Gastrocnemius medialis (tissue), 4 donors: ENCODE measurements at regions of chr11 and their contacts with region 1.

Region 1: DNA sequence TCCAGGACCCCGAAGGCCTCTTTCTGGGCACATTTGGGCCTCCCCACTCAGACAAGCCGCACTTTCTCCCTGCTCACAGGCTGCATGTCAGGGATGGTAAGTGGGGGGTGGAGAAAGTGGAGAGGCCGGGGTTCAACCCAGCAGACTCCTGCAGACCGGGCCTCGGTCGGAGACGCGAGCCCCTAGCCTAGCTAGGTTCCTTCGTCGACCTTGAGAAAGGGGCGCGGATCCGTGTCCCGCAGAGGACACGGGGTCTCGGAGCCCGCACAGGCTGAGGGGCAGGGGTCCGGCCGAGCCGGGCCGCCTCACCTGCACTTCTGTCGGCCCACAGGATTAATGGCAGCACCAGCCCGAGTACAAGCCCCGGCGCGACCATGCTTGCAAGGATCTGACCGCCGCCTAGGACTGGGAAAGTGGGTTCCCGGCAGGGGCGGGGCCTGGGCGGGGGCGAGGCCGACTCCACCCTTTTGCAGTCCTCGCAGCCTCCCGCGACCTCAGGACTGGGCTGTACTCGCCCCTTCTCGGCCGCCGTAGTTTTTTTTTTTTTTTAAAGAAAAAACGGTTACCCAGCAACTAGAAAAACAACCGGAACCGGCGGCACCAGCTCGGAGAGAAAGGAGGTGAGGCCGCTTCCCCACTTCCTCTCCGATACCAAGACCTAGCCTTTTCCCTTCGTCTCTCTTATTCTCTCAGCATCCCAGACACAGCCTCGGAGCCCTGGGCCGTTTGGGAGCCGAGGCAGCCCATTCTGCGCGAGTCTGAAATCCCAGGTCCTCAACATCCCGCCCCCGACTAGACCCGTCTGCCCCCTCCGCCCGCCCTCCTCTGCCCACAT is at the starts of genes SIAE and SPA17:
- DNase-seq: peak; percentile 85 to 90
- ATAC-seq: peak; percentile 87 to 92
- H3K4me3 ChIP-seq: peak within 1 kb of the TSS; percentile 70 to 84 (median 76)
- H3K27ac ChIP-seq: peak within 1 kb of the TSS; percentile 77 to 83 (median 82)
- H3K4me1 ChIP-seq: peaks cover 15 to 17% of the 10 kb centered on the region in 2 donors
- H3K27me3 ChIP-seq: no peaks in the 10 kb centered on the region
- CTCF ChIP-seq: peak in 2 of 5 experiments; percentile 6 to 10
- POLR2A ChIP-seq: peak; percentile 25 to 36
- total RNA-seq, gene SIAE: 8.2 to 12.7 (median 10.1) TPM
- total RNA-seq, gene SPA17: 0.38 to 2.0 (median 0.44) TPM in 3 of 4 donors, not detected in the other

Region 2: DNA sequence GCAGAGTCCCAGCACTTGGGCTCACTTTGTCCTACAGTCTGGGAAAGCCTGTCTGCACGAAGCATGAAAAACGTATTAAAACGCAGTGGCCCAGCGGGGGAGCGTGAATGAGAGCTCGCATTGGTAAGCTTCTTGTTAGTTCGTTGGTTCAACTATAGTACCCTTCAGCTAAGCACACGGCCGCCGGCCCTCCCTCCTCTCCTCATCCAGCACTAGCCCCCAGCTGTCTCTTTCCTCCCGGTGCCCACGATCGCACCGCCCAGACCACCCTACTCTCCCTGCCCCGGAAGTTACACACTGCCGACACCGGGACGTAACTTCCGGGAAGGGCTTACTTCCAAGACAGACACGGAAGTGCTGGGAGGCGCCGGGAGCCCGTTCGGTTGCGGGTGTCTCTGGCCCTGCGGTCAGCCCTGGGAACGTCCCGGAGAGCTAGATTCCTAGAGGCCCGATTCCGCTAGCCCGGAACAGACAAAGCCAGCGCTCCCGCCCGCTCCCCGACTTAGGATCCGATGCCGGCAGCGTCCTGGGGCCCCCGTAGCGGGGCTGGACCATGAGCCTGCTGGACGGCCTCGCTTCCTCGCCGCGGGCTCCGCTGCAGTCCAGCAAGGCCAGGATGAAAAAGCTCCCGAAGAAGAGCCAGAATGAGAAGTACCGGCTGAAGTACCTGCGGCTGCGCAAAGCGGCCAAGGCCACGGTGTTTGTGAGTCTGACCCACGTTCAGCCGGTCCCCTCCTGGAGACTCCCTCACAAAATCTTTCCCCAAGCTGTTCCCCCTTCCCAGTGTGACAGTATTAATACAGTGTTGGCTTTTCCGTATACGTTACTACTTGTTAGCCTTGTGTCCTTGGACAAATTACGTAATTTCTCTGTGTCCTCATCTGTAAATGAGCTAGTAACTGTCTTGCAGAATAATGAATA is 50.8 kb before region 1 on chr11 and contains the start of gene TBRG1:
- in situ Hi-C with region 1: no loop called
- intact Hi-C with region 1: loop called (anchors 5 kb)
- DNase-seq: peak; percentile 80 to 83
- ATAC-seq: peak; percentile 98
- H3K4me3 ChIP-seq: peak within 1 kb of the TSS; percentile 74 to 95 (median 86)
- H3K27ac ChIP-seq: peak within 1 kb of the TSS; percentile 85 to 95 (median 93)
- H3K4me1 ChIP-seq: peaks cover 29 to 32% of the 10 kb centered on the region in 2 donors
- H3K27me3 ChIP-seq: no peaks in the 10 kb centered on the region
- CTCF ChIP-seq: peak in 1 of 5 experiments; percentile 18
- POLR2A ChIP-seq: peak; percentile 85 to 86
- total RNA-seq, gene TBRG1: 20.8 to 42.3 (median 25.6) TPM

Region 3: DNA sequence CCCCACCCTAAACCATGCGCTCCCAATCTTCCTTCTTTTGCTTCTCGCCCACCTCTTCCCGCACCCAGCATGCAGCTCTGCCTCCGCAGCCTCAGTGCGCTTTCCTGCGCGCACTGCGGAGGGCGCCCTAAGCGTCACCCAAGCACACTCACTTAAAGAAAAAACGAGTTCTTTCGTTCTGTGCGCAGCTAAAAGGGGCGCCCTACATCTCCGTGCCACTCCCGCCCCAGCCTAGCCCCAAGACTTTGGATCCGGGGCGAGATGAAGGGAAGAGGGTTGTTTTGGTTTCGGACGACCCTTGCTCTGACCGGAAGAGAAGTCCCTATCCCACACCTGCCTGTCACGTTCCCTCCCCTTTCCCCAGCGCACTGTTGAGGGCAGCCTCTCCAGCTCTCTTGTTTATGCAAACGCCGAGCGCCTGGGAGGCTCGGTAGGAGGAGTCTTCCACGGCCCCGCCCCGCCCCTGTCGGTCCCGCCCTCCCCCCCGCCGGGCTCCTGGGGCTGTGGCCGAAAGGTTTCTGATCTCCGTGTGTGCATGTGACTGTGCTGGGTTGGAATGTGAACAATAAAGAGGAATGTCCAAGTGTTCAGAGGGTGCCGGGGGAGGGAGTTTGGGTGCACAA is 73.2 kb after region 1 on chr11:
- in situ Hi-C with region 1: no loop called
- intact Hi-C with region 1: loop called (anchors 5 kb)
- DNase-seq: peak in 1 of 2 donors; percentile 58
- ATAC-seq: peak; percentile 78 to 83
- H3K4me3 ChIP-seq: peak overlapping the region; percentile 53 to 73 (median 65)
- H3K27ac ChIP-seq: peak overlapping the region; percentile 25 to 70 (median 64)
- H3K4me1 ChIP-seq: peaks cover 0 to 12% of the 10 kb centered on the region in 2 donors
- H3K27me3 ChIP-seq: peaks cover 34 to 72% (median 61%) of the 10 kb centered on the region in 3 donors
- CTCF ChIP-seq: peak in 3 of 5 experiments; percentile 25 to 56 (median 30)
- POLR2A ChIP-seq: peak; percentile 26 to 61

Region 4: GRCh38 chr11:124763156-124763947 is 89.8 kb after region 1 on chr11:
- in situ Hi-C with region 1: loop called (anchors 5 to 10 kb)
- intact Hi-C with region 1: loop called (anchors 1 kb)
- DNase-seq: peak in 1 of 2 donors; percentile 58
- ATAC-seq: peak; percentile 39 to 52
- H3K4me3 ChIP-seq: peak overlapping the region; percentile 52 to 67 (median 60)
- H3K27ac ChIP-seq: peak overlapping the region in 3 of 4 donors; percentile 76 to 87 (median 87)
- H3K4me1 ChIP-seq: peaks cover 9 to 24% of the 10 kb centered on the region in 2 donors
- H3K27me3 ChIP-seq: peaks cover 32 to 40% (median 35%) of the 10 kb centered on the region in 3 donors
- CTCF ChIP-seq: peak; percentile 67 to 82 (median 71)
- POLR2A ChIP-seq: no peak

Region 5: GRCh38 chr11:124837491-124837856 is 163.9 kb after region 1 on chr11:
- in situ Hi-C with region 1: loop called (anchors 5 to 10 kb)
- intact Hi-C with region 1: loop called (anchors 1 kb)
- DNase-seq: no peak
- ATAC-seq: peak in 1 of 2 donors; percentile 52
- H3K4me3 ChIP-seq: no peak overlapping the region
- H3K27ac ChIP-seq: no peak overlapping the region
- H3K4me1 ChIP-seq: peaks cover 9 to 16% of the 10 kb centered on the region in 2 donors
- H3K27me3 ChIP-seq: peaks cover 44 to 49% (median 44%) of the 10 kb centered on the region in 3 donors
- CTCF ChIP-seq: no peak
- POLR2A ChIP-seq: no peak

Region 6: GRCh38 chr11:125111343-125112207 is 438.0 kb after region 1 on chr11 and contains the start of gene TMEM218:
- in situ Hi-C with region 1: no loop called
- intact Hi-C with region 1: loop called (anchors 1 kb)
- DNase-seq: peak; percentile 99
- ATAC-seq: peak; percentile 98 to 99
- H3K4me3 ChIP-seq: peak within 1 kb of the TSS; percentile 86 to 97 (median 92)
- H3K27ac ChIP-seq: peak within 1 kb of the TSS; percentile 82 to 86 (median 84)
- H3K4me1 ChIP-seq: peaks cover 11 to 15% of the 10 kb centered on the region in 2 donors
- H3K27me3 ChIP-seq: peaks cover 0 to 3% (median 0%) of the 10 kb centered on the region in 3 donors
- CTCF ChIP-seq: no peak
- POLR2A ChIP-seq: no peak
- total RNA-seq, gene TMEM218: 6.3 to 11.2 (median 9.4) TPM

Region 7: GRCh38 chr11:125592305-125593112 is 919.0 kb after region 1 on chr11 and contains the start of gene STT3A:
- in situ Hi-C with region 1: no loop called
- intact Hi-C with region 1: loop called (anchors 10 kb)
- DNase-seq: peak; percentile 99 to 100
- ATAC-seq: peak; percentile 95 to 97
- H3K4me3 ChIP-seq: peak within 1 kb of the TSS; percentile 86 to 95 (median 90)
- H3K27ac ChIP-seq: peak within 1 kb of the TSS; percentile 89 to 99 (median 94)
- H3K4me1 ChIP-seq: peaks cover 17 to 24% of the 10 kb centered on the region in 2 donors
- H3K27me3 ChIP-seq: no peaks in the 10 kb centered on the region
- CTCF ChIP-seq: no peak
- POLR2A ChIP-seq: peak; percentile 86 to 90
- total RNA-seq, gene STT3A: 31.5 to 34.6 (median 32.9) TPM